CD4-positive, alpha-beta memory T cell (primary cell): ENCODE measurements at regions of chr3 and their contacts with region 1.

Region 1: DNA sequence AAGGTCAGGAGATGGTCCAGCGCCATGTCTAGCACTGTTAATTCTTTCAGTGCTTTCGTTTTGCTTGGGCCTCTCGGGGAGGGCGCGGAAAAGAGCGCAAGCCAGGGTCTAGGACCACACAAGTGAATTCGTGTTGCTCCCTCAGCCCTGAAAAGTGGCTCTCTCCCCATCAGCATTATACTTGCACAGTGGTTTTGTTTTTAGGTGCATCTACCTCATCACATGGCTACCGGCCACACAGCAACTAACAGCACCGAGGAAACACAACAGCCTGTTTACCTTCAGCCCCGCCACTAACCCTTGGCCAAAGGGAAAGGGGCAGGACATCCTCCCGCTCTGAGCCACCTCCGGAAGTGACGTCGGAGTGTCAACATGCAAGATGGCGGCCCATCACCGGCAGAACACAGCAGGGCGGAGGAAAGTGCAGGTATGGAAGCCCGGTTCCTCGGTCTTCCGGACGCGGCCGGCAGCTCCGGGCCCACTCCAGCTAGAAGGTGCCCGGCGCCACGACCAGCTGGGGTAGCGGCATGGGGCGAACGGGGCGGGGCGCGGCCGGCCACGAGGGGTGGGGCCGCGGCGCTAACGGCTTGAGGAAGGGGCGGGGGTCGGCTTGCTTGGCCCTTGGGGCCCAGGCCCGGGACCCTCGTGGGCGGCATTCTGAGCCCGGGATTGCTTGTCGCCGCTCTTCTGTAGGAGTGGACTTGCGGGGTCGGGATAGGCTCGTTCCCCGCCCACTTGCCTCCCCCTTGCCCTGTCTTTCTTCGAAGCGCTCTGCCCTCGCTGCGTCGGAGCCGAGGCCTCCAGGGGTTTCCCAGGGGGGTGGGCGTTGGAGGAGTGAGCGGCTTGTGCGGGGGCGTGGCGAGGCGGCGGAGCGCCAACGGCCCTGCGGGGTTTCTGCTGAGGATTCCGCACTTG is at the starts of genes SCN11A and WDR48:
- DNase-seq: peak; percentile 89 to 97 (median 92)
- H3K4me3 ChIP-seq: peak within 1 kb of the TSS; percentile 21 to 67
- H3K4me3 Mint-ChIP-seq: peak within 1 kb of the TSS; percentile 89 to 99 (median 97)
- H3K27ac ChIP-seq: peak within 1 kb of the TSS; percentile 94
- H3K27ac Mint-ChIP-seq: peak within 1 kb of the TSS; percentile 98 to 100 (median 98)
- H3K4me1 ChIP-seq: peaks cover 36% of the 10 kb centered on the region
- H3K4me1 Mint-ChIP-seq: peaks cover 50 to 86% (median 68%) of the 10 kb centered on the region in 4 donors
- H3K27me3 ChIP-seq: no peaks in the 10 kb centered on the region
- H3K27me3 Mint-ChIP-seq: peaks cover 0 to 1% of the 10 kb centered on the region in 2 donors
- total RNA-seq, gene SCN11A: 0.08 to 0.15 TPM
- total RNA-seq, gene WDR48: 59.4 to 69.8 TPM

Region 2: GRCh38 chr3:38507120-38507519 is 544.8 kb before region 1 on chr3:
- CTCF ChIA-PET with region 1: no interaction called
- POLR2A ChIA-PET with region 1: no interaction called
- intact Hi-C with region 1: loop called (anchors 5 kb)
- DNase-seq: no peak
- H3K4me3 ChIP-seq: no peak overlapping the region
- H3K4me3 Mint-ChIP-seq: no peak overlapping the region
- H3K27ac ChIP-seq: no peak overlapping the region
- H3K27ac Mint-ChIP-seq: peak overlapping the region in 3 of 7 donors; percentile 0 to 31 (median 14)
- H3K4me1 ChIP-seq: no peaks in the 10 kb centered on the region
- H3K4me1 Mint-ChIP-seq: no peaks in the 10 kb centered on the region
- H3K27me3 ChIP-seq: no peaks in the 10 kb centered on the region
- H3K27me3 Mint-ChIP-seq: no peaks in the 10 kb centered on the region

Region 3: DNA sequence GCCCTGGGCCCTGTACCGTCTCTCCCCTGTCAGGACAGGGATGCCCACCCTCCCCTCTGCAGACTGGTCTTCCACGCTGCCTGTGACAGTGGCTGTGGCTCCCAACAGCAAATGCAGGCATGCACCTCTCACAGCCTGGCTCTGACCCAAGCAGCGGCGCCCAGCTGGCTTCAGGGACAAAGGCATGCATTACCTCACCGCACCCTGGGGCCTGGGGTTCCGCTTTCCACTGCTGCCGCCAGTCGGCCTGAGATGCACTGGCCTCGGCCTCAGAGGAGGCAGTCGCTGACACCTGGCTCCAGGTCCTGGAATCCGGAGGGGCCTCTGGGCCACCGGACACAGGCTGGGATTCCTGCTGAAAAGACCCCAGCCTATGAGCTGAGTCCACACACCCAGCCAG is 472.8 kb before region 1 on chr3:
- CTCF ChIA-PET with region 1: no interaction called
- POLR2A ChIA-PET with region 1: no interaction called
- intact Hi-C with region 1: no loop called
- DNase-seq: no peak
- H3K4me3 ChIP-seq: no peak overlapping the region
- H3K4me3 Mint-ChIP-seq: no peak overlapping the region
- H3K27ac ChIP-seq: no peak overlapping the region
- H3K27ac Mint-ChIP-seq: no peak overlapping the region
- H3K4me1 ChIP-seq: no peaks in the 10 kb centered on the region
- H3K4me1 Mint-ChIP-seq: no peaks in the 10 kb centered on the region
- H3K27me3 ChIP-seq: no peaks in the 10 kb centered on the region
- H3K27me3 Mint-ChIP-seq: peaks cover 1 to 2% of the 10 kb centered on the region in 2 donors

Region 4: DNA sequence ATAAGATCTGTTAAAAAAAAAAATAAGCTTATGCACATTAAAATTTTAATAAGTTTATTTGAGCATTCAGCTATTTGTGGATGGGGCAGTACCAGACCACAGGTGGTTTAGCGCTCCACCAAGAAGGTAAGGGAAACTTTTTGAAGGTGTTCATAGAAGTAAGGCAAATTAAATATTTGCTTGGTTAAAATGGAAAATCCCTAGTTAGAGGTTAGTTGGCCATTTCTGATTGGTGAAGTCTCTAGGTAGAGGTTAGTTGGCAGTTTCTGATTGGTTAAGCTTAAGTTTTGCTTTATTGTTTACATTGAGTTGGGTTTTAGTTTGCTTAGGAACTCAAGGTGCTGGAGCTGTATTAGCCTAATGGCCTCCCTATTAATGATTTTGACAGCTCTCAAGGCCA is 30.9 kb before region 1 on chr3:
- CTCF ChIA-PET with region 1: no interaction called
- POLR2A ChIA-PET with region 1: no interaction called
- intact Hi-C with region 1: no loop called
- DNase-seq: no peak
- H3K4me3 ChIP-seq: no peak overlapping the region
- H3K4me3 Mint-ChIP-seq: no peak overlapping the region
- H3K27ac ChIP-seq: no peak overlapping the region
- H3K27ac Mint-ChIP-seq: no peak overlapping the region
- H3K4me1 ChIP-seq: no peaks in the 10 kb centered on the region
- H3K4me1 Mint-ChIP-seq: no peaks in the 10 kb centered on the region
- H3K27me3 ChIP-seq: no peaks in the 10 kb centered on the region
- H3K27me3 Mint-ChIP-seq: peaks cover 20 to 25% of the 10 kb centered on the region in 2 donors

Region 5: GRCh38 chr3:39107388-39108199 is 55.7 kb after region 1 on chr3 and contains the starts of genes GORASP1 and TTC21A:
- CTCF ChIA-PET with region 1: no interaction called
- POLR2A ChIA-PET with region 1: interaction called, 3 read pairs
- intact Hi-C with region 1: loop called (anchors 5 kb)
- DNase-seq: peak; percentile 58 to 87 (median 70)
- H3K4me3 ChIP-seq: peak within 1 kb of the TSS; percentile 67 to 71
- H3K4me3 Mint-ChIP-seq: peak within 1 kb of the TSS; percentile 87 to 99 (median 94)
- H3K27ac ChIP-seq: peak within 1 kb of the TSS; percentile 76
- H3K27ac Mint-ChIP-seq: peak within 1 kb of the TSS; percentile 88 to 99 (median 96)
- H3K4me1 ChIP-seq: peaks cover 45% of the 10 kb centered on the region
- H3K4me1 Mint-ChIP-seq: peaks cover 37 to 60% (median 49%) of the 10 kb centered on the region in 4 donors
- H3K27me3 ChIP-seq: no peaks in the 10 kb centered on the region
- H3K27me3 Mint-ChIP-seq: no peaks in the 10 kb centered on the region
- total RNA-seq, gene GORASP1: 57.1 to 58.4 TPM
- total RNA-seq, gene TTC21A: 3.0 to 3.9 TPM

Region 6: GRCh38 chr3:39383045-39383880 is 331.4 kb after region 1 on chr3 and contains the start of gene SLC25A38:
- CTCF ChIA-PET with region 1: no interaction called
- POLR2A ChIA-PET with region 1: interaction called, 4 read pairs
- intact Hi-C with region 1: loop called (anchors 1 kb)
- DNase-seq: peak; percentile 82 to 90 (median 85)
- H3K4me3 ChIP-seq: peak within 1 kb of the TSS; percentile 91 to 92
- H3K4me3 Mint-ChIP-seq: peak within 1 kb of the TSS; percentile 96 to 100 (median 98)
- H3K27ac ChIP-seq: peak within 1 kb of the TSS; percentile 93
- H3K27ac Mint-ChIP-seq: peak within 1 kb of the TSS; percentile 97 to 100 (median 100)
- H3K4me1 ChIP-seq: peaks cover 46% of the 10 kb centered on the region
- H3K4me1 Mint-ChIP-seq: peaks cover 31 to 53% (median 44%) of the 10 kb centered on the region in 4 donors
- H3K27me3 ChIP-seq: no peaks in the 10 kb centered on the region
- H3K27me3 Mint-ChIP-seq: no peaks in the 10 kb centered on the region
- total RNA-seq, gene SLC25A38: 46.0 to 53.5 TPM

Region 7: DNA sequence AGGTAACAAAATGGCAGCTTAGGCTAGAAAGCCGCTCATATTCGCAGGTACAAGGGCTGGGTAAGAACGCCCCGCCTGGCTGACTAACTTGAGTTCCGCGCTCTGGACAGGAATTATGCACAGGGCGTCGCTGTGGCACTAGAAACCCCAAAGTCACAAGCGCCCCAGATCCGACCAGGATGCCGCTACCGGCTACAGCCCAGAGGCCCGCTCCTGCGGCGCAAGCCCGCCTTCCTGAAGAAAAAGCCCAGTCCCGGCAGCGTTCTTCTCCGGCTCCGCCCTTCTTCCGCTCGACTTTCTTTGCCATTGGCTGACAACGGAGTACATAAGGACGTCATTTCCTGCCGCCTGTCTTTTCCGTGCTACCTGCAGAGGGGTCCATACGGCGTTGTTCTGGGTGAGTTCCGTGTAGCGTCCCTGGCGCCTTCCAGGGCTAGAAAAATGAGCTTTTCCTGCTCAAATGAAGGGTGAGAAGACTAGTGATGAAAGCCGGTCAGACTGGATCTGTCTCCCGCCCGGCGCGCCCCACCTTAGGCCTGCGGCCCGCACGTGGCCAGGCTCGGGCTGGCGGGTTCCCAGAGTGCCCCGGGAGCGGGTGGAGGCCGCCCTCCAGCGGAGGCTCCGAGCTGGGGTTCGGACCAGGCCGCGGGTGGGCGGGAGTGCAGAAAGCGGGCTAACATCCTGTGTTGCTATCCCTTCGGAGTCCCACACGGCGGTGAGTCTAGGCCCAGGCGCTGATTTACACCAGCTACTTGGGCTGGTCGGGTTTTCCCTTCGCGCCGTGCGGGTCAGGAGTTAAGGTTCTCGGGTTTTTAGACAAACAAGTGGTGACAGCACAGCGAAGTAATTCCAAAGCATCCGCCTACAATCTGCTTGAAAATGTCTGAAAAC is 354.7 kb after region 1 on chr3 and contains the start of gene RPSA:
- CTCF ChIA-PET with region 1: no interaction called
- POLR2A ChIA-PET with region 1: interaction called, 5 read pairs
- intact Hi-C with region 1: loop called (anchors 1 kb)
- DNase-seq: peak; percentile 91 to 99 (median 99)
- H3K4me3 ChIP-seq: peak within 1 kb of the TSS; percentile 31 to 72
- H3K4me3 Mint-ChIP-seq: peak within 1 kb of the TSS; percentile 88 to 99 (median 96)
- H3K27ac ChIP-seq: peak within 1 kb of the TSS; percentile 81
- H3K27ac Mint-ChIP-seq: peak within 1 kb of the TSS; percentile 88 to 99 (median 98)
- H3K4me1 ChIP-seq: peaks cover 47% of the 10 kb centered on the region
- H3K4me1 Mint-ChIP-seq: peaks cover 30 to 54% (median 43%) of the 10 kb centered on the region in 4 donors
- H3K27me3 ChIP-seq: no peaks in the 10 kb centered on the region
- H3K27me3 Mint-ChIP-seq: no peaks in the 10 kb centered on the region
- total RNA-seq, gene RPSA: 1,582 to 1,688 TPM